Posterior vena cava (tissue), 2 donors: ENCODE measurements at regions of chr12 and their contacts with region 1.

Region 1: GRCh38 chr12:49336645-49337584 is at the start of gene C1QL4:
- DNase-seq: peak; percentile 95
- total RNA-seq, gene C1QL4: not detected

Region 2: DNA sequence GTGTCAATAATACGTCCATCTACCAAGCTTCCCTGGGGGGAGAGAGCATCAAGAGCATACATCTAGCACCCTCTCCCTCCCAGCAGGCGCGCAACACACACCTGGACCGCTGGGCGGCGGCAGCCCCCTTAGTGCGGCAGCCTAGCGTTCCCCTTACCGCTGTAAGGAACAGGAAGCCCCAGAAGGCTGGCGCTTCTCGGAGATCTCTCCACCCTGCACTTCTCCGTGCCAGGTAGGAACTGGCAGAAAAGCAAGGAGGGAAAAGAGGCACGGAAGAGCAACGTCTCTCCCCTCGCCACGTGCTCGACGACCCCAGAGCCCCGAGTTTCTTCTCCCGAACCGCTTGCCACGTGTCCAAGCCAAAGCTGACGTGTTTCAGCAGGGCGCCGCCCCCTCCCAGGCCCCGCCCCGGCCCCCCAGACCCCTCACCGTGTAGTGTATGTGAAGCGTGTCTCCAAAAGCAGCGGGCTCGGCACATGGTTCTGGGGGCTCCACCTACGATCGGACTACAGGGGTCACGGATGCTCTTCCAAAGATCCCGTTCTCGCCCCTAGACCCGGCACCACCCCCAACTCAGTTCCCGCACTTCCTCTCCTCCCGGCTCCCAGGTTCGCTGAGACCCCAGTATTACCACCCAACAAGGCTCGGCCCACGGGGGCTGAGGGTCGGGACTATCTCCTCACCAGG is 412.2 kb before region 1 on chr12:
- intact Hi-C with region 1: no loop called
- DNase-seq: no peak

Region 3: GRCh38 chr12:49358483-49359141 is 21.7 kb after region 1 on chr12:
- intact Hi-C with region 1: loop called in 1 of 2 experiments (anchors 1 kb)
- DNase-seq: peak; percentile 29